PC-9 (cell line): ENCODE measurements at regions of chr20 and their contacts with region 1.

Region 1: DNA sequence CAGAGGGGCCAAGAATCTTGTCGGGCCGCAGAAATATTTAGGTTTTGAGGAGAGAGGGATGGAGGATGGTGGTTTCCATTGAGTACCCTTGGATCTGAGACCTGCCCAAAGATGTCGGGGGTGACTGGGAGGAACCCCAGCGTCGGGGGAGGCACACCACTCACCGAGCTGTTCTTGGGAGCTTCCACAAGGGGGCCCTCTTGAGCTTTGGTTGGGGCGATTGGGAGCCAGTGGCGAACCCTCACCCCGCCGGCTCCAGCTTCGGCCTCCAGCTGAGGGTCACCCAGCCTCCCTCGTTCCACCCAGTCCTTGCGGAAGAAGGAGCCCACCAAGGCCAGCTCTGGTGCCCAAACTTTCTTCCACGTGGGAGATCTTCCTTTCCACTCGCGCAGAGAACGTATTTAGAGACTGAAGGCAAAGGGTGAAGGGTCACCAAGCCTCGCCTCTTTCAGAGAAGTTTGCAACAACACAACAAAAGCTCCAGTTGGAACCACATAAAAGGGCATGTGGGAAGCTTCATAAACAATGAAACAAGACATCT is 33.6 kb downstream of the APCDD1L start:
- DNase-seq: peak; percentile 49 to 50
- H3K4me3 ChIP-seq: no peak overlapping the region
- H3K27ac ChIP-seq: no peak overlapping the region
- H3K4me1 ChIP-seq: no peaks in the 10 kb centered on the region
- H3K27me3 ChIP-seq: no peaks in the 10 kb centered on the region
- CTCF ChIP-seq: peak; percentile 91

Region 2: GRCh38 chr20:58542411-58543095 is 61.0 kb after region 1 on chr20:
- CTCF ChIA-PET with region 1: no interaction called
- POLR2A ChIA-PET with region 1: no interaction called
- intact Hi-C with region 1: no loop called
- DNase-seq: peak; percentile 48 to 78
- H3K4me3 ChIP-seq: no peak overlapping the region
- H3K27ac ChIP-seq: peak overlapping the region; percentile 86
- H3K4me1 ChIP-seq: peaks cover 28% of the 10 kb centered on the region
- H3K27me3 ChIP-seq: no peaks in the 10 kb centered on the region
- CTCF ChIP-seq: no peak

Region 3: GRCh38 chr20:58839474-58839874 is 357.9 kb after region 1 on chr20:
- CTCF ChIA-PET with region 1: interaction called, 3 read pairs
- POLR2A ChIA-PET with region 1: no interaction called
- intact Hi-C with region 1: loop called (anchors 2 kb)
- DNase-seq: peak in 1 of 2 experiments; percentile 23
- H3K4me3 ChIP-seq: no peak overlapping the region
- H3K27ac ChIP-seq: no peak overlapping the region
- H3K4me1 ChIP-seq: no peaks in the 10 kb centered on the region
- H3K27me3 ChIP-seq: peaks cover 38% of the 10 kb centered on the region
- CTCF ChIP-seq: peak; percentile 54; the same call in 1 of the 2 replicates